GM10248 (cell line): ENCODE measurements at regions of chr11 and their contacts with region 1.

Region 1: DNA sequence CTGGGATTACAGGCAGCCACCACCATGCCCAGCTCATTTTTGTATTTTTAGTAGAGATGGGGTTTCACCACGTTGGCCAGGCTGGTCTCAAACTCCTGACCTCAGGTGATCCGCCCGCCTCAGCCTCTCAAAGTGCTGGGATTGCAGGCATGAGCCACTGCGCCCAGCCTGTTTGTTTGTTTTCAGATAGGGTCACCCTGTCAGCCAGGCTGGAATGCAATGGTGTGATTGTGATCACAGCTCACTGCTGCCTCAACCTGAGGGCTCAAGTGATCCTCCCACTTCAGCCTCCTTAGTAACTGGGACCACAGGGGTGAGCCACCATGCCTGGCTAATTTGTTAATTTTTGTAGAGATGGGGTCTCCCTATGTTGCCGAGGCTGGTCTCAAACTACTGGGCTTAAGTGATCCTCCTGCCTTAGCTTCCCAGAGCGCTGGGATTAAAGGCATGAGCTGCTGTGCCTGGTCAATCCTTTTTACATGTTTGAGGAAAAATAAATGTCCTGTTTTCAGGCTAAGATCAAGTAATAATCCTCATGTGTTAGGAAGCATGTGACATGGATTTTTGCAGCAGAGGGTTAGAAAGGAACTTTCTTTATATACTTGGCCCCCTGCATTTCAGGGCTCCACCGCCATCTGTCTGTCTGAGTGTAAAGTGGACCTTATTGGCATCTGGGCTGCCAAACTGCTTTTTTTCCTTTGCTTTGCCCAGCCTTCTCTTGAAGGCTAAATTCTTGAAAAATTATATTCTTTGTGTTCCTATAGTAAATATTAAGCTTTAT is 4.8 kb upstream of the SLC3A2 start:
- DNase-seq: no peak
- CTCF ChIP-seq: no peak

Region 2: GRCh38 chr11:62860835-62861563 is 14.9 kb before region 1 on chr11:
- CTCF ChIA-PET with region 1: interaction called, 30 read pairs
- POLR2A ChIA-PET with region 1: interaction called, 14 read pairs
- DNase-seq: no peak
- CTCF ChIP-seq: no peak

Region 3: GRCh38 chr11:63289658-63290057 is 413.8 kb after region 1 on chr11:
- CTCF ChIA-PET with region 1: no interaction called
- POLR2A ChIA-PET with region 1: no interaction called
- DNase-seq: no peak
- CTCF ChIP-seq: no peak